ENCODE measurements at regions of chr1 and their contacts with region 1.

Region 1: GRCh38 chr1:103106426-103107341 is 1.6 kb downstream of the COL11A1 start:
- DNase-seq: peak in 8 of 10 donors; percentile 13 to 82 (median 23)

Region 2: DNA sequence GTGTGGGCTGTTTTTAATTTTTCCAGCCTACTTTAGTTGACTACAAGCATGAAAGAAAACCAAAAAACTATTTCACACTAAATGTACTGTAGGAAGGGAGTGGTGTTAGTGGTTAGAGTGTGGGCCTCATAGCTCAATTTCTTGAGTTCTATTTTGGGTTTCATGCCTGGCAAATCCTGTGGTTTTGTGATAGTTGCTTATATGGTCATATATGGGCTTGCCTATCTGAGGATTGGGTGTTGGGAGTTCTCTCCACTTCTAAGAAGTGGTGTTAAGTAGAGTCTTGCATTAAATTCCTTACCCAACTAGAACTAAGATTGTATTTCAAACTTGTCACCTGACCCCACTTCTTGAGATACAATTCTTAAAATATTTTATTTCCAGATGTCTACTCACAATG is 39.5 kb after region 1 on chr1:
- intact Hi-C with region 1: loop called (anchors 1 kb)
- DNase-seq: no peak

Region 3: DNA sequence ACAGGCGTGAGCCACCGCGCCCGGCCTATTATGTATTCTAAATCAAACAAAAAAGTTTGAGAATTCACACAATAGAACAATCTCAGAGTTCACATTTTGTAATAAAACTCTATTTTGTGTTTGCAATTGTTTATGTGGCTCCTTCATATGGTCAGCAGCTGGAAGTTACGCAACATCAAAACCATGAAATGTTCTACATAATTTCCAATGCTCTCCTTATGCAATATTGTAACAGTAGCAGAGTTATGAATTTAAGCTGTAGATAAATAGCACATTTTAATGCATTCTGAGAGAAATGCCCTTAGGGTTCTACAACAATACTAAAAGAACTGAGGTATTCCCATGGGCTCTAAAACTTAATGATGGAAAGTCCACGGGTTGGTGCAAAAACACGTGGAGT is 63.9 kb after region 1 on chr1:
- intact Hi-C with region 1: no loop called
- DNase-seq: no peak

Region 4: GRCh38 chr1:103461161-103462105 is 354.7 kb after region 1 on chr1:
- intact Hi-C with region 1: loop called (anchors 2 kb)
- DNase-seq: no peak

Region 5: GRCh38 chr1:103514920-103515503 is 408.3 kb after region 1 on chr1:
- intact Hi-C with region 1: loop called (anchors 2 kb)
- DNase-seq: no peak

Measured in posterior cingulate gyrus (tissue), 11 donors.